Activated CD4-positive, alpha-beta T cell treated with anti-CD3 and anti-CD28 coated beads for 36 hours (primary cell): ENCODE measurements at regions of chr3 and their contacts with region 1.

Region 1: DNA sequence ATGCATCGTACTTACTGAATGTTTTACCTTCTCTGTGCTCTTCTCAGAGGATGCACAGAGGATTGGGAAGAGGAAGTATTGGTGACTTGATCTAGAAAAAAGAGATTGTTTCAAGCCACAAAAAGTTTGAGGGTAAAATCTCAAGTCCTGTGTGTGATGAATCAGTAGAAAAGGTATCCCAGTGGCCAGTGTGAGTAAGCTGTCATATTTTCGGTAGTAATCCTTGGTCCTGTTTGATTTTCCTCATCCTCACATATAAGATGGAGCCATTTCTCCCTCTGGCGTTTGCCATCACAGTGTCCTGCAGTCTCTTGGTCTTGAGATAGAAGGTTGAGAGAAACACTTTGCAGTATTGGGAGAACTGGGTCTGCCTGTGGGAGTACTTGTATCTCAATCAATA is 166.8 kb downstream of the LPP start:
- DNase-seq: no peak
- ATAC-seq: no peak
- H3K4me3 Mint-ChIP-seq: no peak overlapping the region
- H3K27ac Mint-ChIP-seq: no peak overlapping the region
- H3K4me1 Mint-ChIP-seq: peaks cover 63% of the 10 kb centered on the region
- H3K27me3 Mint-ChIP-seq: peaks cover 3% of the 10 kb centered on the region

Region 2: DNA sequence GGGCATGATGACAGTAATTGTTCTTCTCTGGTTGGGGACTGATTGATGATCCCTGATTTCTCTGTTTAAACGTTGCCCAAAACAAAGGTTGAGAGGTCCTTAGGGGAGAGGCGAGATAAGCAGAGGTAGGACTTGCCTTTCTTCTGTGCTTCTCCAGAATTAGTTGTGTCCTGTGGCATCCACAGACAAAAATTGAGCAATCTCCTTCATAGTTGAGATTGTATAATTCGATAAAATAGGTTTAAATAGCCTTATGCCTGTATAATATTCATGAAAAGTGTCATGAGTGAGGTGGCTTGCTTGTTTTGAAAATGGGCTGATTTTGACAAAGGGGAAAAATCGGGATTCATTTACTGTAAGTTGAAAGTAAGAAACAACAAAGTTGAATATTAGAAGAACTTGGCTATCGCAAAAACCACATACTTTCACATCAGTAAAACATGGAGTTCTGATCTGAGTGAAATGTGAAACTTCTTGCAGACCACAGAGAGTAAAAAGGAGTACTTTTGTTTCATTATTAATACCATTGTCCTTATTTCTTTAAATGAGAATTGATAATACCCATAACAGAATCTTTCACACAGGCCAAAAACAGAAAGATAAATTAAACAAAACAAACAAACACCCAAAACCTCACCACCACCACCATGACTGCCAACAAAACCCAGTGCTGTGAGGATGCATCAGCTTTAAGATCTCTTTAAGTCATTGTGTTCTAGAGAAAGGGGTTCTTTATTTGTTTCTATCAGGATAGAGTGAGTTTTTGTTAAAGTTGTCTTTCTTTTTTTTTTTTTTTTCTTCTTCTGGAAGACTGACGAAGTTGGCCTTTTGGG is 11.1 kb before region 1 on chr3:
- CTCF ChIA-PET with region 1: interaction called, 4 read pairs
- POLR2A ChIA-PET with region 1: no interaction called
- intact Hi-C with region 1: loop called (anchors 1 kb)
- DNase-seq: peak; percentile 50
- ATAC-seq: peak; percentile 85
- H3K4me3 Mint-ChIP-seq: peak overlapping the region; percentile 9
- H3K27ac Mint-ChIP-seq: peak overlapping the region; percentile 80
- H3K4me1 Mint-ChIP-seq: peaks cover 26% of the 10 kb centered on the region
- H3K27me3 Mint-ChIP-seq: no peaks in the 10 kb centered on the region

Region 3: DNA sequence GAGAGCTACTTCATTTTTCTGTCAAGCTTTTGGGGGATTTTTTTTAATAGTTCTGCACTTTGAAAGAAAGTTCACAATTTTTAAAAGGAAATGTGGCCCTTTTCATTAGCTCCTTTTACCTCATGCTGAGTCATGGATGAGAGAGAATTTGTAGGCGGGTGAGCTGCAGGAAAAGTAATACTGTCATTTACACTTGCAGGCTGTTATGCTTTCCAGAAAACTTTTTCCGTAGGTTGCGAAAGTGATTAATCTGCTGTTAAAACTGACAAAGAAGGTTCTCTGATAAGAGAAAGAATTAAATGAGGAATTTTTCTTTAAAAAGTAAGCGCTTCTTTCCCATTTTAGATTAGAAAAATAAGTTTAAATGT is 263.4 kb after region 1 on chr3:
- CTCF ChIA-PET with region 1: no interaction called
- POLR2A ChIA-PET with region 1: no interaction called
- intact Hi-C with region 1: loop called in 1 of 2 experiments (anchors 5 kb)
- DNase-seq: peak; percentile 43
- ATAC-seq: peak; percentile 60
- H3K4me3 Mint-ChIP-seq: no peak overlapping the region
- H3K27ac Mint-ChIP-seq: no peak overlapping the region
- H3K4me1 Mint-ChIP-seq: peaks cover 12% of the 10 kb centered on the region
- H3K27me3 Mint-ChIP-seq: no peaks in the 10 kb centered on the region

Region 4: DNA sequence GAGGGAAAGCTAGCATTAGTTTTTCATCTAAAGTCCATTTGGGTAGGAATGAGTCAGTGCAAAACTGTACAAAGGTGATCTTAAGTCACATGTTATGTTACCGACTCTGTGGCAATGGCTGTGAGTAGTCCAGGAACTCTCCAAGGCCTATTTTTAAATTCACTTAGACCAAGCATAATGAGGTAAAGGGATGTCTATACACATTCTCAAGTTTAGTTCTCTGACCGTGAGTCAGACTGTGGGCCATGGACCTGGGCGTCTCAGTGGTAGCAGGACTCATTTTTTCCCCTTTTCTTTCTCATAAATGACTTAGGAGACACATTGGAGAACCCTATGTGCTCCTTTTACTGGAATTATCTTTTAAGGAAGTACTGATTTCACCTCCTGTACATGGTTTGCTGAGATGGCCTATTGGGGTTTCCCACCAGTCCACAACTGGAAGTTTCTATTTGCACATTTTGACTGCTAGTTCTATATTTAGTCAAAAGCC is 362.3 kb after region 1 on chr3:
- CTCF ChIA-PET with region 1: no interaction called
- POLR2A ChIA-PET with region 1: no interaction called
- intact Hi-C with region 1: loop called in 1 of 2 experiments (anchors 1 kb)
- DNase-seq: peak; percentile 69
- ATAC-seq: peak; percentile 97
- H3K4me3 Mint-ChIP-seq: no peak overlapping the region
- H3K27ac Mint-ChIP-seq: no peak overlapping the region
- H3K4me1 Mint-ChIP-seq: peaks cover 41% of the 10 kb centered on the region
- H3K27me3 Mint-ChIP-seq: no peaks in the 10 kb centered on the region